BJ (cell line): ENCODE measurements at regions of chr16 and their contacts with region 1.

Region 1: DNA sequence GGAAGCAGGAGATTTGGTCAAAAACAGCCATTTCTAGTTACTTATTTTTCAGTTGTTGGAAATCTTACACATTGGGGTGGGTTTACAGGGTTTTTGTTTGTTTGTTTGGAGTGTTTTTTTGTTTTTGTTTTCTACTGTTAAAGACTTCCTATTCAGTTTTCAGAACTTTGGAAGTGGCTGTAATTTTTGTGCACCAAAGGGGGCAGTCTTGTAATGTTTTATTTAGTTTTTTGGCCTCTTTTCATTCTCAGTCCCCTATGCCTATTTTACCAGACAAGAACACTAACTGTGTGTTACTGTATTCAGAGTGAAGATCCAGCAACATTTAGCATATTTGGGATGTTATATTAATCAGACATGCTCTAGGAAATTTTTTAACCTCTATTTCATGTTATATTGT is 20.6 kb downstream of the TPPP3 start:
- DNase-seq: no peak
- H3K4me3 ChIP-seq: no peak overlapping the region
- H3K27me3 ChIP-seq: peaks cover 6% of the 10 kb centered on the region
- CTCF ChIP-seq: peak; percentile 51; the same call in 1 of the 2 replicates

Region 2: DNA sequence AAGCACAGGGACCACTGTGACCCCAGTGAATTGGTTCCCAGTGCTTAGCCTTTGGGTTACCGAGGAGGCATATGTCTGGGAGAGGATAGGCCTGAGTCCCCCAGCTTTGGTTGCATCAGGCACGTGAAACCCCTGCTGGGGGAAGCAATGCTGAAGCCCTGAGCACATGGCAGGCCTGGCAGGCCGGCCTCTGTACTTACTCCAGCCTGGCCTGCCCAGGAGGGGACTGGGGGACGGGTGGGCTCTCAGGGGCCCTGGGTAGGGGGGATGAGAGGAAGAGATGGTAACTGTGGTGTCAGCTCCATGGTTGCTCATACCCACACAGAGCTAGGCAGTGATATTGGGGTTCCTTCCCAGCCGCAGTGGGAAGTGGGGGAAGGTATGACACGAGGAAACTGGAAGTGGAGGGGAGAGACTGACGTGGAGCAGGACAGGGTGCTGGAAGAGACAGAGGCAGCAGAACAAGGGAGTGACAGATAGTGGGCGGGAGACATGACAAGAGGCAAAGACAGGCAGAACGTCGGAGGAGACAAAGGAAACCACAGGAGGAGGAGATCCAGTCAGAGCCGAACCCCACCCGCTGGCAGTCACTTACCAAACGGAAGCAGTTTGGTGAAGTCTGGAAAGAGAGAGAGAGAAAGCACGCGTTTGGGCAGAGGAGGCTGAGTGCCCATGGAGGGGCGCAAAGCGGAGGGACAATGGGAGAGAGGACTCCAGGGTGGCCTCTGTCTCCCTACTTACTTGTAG is 136.7 kb before region 1 on chr16:
- CTCF ChIA-PET with region 1: no interaction called
- POLR2A ChIA-PET with region 1: no interaction called
- DNase-seq: no peak
- H3K4me3 ChIP-seq: no peak overlapping the region
- H3K27me3 ChIP-seq: no peaks in the 10 kb centered on the region
- CTCF ChIP-seq: no peak

Region 3: DNA sequence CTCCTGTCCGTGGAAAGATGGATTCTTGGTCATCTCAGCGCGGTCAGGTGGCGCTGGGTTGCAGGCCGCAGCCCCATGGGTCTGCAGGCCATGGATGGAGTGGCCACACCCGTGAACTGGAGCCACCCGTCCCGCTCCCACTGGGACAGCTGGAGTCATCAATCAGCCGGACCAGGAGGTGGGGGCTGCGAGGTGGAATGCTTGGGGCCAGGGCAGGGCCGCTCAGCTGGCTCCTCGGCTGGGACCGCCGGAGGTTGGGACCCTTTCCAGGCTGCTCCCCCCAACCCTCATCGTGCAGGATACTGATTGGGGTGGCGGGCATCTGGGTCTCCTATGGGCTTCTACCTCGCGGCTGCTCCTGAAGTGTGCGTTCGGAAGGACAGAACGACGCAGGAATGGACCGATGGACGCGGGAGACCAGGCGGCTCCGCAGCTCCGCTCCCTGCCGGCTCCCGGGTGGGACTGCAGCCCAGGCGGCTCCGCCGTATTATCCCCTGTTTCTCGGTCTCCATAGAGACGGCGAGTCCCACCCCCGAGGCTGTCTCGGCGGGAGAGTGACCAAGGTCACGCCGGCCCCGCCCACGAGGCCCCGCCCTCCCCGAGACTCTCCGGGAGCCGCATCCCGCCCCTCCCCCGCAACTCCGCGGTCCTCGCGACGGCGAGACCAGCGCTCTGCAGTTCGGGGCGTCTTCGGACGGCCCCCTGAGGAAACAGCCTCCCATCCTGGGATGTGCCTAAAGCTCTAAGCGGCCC is 20.5 kb after region 1 on chr16 and contains the start of gene TPPP3:
- CTCF ChIA-PET with region 1: interaction called, 13 read pairs
- POLR2A ChIA-PET with region 1: interaction called, 4 read pairs
- DNase-seq: peak; percentile 24
- H3K4me3 ChIP-seq: peak within 1 kb of the TSS; percentile 31
- H3K27me3 ChIP-seq: peaks cover 6% of the 10 kb centered on the region
- CTCF ChIP-seq: peak; percentile 72
- polyA plus RNA-seq, gene TPPP3: 0.26 and 0.64 TPM in 2 replicates

Region 4: DNA sequence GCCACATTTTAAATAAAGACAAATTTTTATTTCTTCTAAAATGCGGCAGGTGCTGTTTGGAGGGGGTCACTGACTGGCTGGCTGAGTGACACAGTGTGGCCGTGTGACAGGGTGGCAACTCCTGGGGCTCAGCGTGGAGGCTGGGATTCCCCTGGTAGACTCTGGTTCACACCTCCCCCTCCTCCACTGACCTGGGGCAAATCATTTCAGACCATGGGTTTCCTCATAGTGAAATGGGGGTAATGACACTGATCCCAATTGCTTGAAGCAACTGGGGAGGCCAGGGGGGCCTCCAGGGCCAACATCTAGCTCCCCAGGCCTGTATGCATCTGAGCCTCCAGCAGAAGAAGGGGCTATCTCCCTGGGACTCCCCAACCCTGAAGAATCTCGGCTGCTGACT is 64.8 kb after region 1 on chr16:
- CTCF ChIA-PET with region 1: no interaction called
- POLR2A ChIA-PET with region 1: no interaction called
- DNase-seq: no peak
- H3K4me3 ChIP-seq: no peak overlapping the region
- H3K27me3 ChIP-seq: no peaks in the 10 kb centered on the region
- CTCF ChIP-seq: no peak